CD8-positive, alpha-beta memory T cell (primary cell): ENCODE measurements at regions of chr12 and their contacts with region 1.

Region 1: DNA sequence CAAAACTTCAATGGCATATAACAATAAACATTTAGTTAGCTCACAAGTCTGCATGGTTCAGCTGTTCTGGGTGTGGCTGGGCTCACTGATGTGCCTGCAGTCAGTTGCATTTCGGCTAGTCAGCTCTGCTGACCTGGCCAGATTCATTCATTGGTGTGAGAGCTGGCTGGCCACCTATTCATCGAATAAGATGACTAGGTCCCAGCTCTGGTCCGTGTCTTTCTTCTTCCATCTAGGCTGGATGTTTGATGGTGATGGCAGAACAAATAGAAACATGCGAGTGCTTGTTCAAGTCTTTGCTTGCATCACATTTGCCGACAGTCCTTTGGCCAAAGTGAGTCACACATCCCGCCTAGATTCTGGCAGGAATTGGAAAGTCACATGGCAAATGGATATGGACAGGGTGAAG is 203.3 kb upstream of the CRY1 start:
- DNase-seq: no peak
- H3K4me3 ChIP-seq: no peak overlapping the region
- H3K4me3 Mint-ChIP-seq: no peak overlapping the region
- H3K27ac ChIP-seq: no peak overlapping the region
- H3K27ac Mint-ChIP-seq: no peak overlapping the region
- H3K4me1 ChIP-seq: peaks cover 5% of the 10 kb centered on the region
- H3K4me1 Mint-ChIP-seq: peaks cover 5 to 10% (median 10%) of the 10 kb centered on the region in 3 donors
- H3K27me3 ChIP-seq: no peaks in the 10 kb centered on the region
- H3K27me3 Mint-ChIP-seq: peaks cover 0 to 1% of the 10 kb centered on the region in 2 donors

Region 2: GRCh38 chr12:106855221-106855758 is 441.4 kb before region 1 on chr12:
- CTCF ChIA-PET with region 1: no interaction called
- POLR2A ChIA-PET with region 1: interaction called, 12 read pairs
- DNase-seq: no peak
- H3K4me3 ChIP-seq: no peak overlapping the region
- H3K4me3 Mint-ChIP-seq: no peak overlapping the region
- H3K27ac ChIP-seq: no peak overlapping the region
- H3K27ac Mint-ChIP-seq: no peak overlapping the region
- H3K4me1 ChIP-seq: peaks cover 8% of the 10 kb centered on the region
- H3K4me1 Mint-ChIP-seq: peaks cover 4 to 5% (median 4%) of the 10 kb centered on the region in 3 donors
- H3K27me3 ChIP-seq: no peaks in the 10 kb centered on the region
- H3K27me3 Mint-ChIP-seq: no peaks in the 10 kb centered on the region

Region 3: DNA sequence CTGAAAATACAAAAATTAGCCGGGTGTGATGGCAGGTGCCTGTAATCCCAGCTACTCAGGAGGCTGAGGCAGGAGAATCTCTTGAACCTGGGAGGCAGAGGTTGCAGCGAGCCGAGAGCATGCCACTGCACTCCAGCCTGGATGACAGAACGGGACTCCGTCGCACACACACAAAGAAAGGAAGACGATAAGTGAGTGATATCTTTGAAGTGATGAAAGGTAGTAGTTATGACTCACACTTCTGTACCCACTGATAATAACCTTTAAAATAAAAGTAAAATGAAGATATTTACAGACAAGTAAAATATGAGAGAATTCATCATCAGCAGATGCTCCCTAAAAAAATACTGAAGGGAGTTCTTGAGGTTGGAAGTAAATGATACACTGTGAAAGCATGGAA is 32.0 kb before region 1 on chr12:
- CTCF ChIA-PET with region 1: no interaction called
- POLR2A ChIA-PET with region 1: no interaction called
- DNase-seq: no peak
- H3K4me3 ChIP-seq: no peak overlapping the region
- H3K4me3 Mint-ChIP-seq: peak overlapping the region in 2 of 7 donors; percentile 20 to 48
- H3K27ac ChIP-seq: no peak overlapping the region
- H3K27ac Mint-ChIP-seq: peak overlapping the region in 1 of 8 donors; percentile 49
- H3K4me1 ChIP-seq: no peaks in the 10 kb centered on the region
- H3K4me1 Mint-ChIP-seq: no peaks in the 10 kb centered on the region
- H3K27me3 ChIP-seq: no peaks in the 10 kb centered on the region
- H3K27me3 Mint-ChIP-seq: peaks cover 6 to 13% of the 10 kb centered on the region in 2 donors

Region 4: GRCh38 chr12:107372229-107372658 is 75.6 kb after region 1 on chr12:
- CTCF ChIA-PET with region 1: no interaction called
- POLR2A ChIA-PET with region 1: no interaction called
- DNase-seq: peak in 4 of 5 donors; percentile 30 to 69 (median 57)
- H3K4me3 ChIP-seq: peak overlapping the region; percentile 28
- H3K4me3 Mint-ChIP-seq: peak overlapping the region; percentile 52 to 79 (median 70)
- H3K27ac ChIP-seq: peak overlapping the region; percentile 5
- H3K27ac Mint-ChIP-seq: peak overlapping the region; percentile 48 to 97 (median 94)
- H3K4me1 ChIP-seq: peaks cover 71% of the 10 kb centered on the region
- H3K4me1 Mint-ChIP-seq: peaks cover 72 to 80% (median 75%) of the 10 kb centered on the region in 3 donors
- H3K27me3 ChIP-seq: no peaks in the 10 kb centered on the region
- H3K27me3 Mint-ChIP-seq: peaks cover 0 to 1% of the 10 kb centered on the region in 2 donors

Region 5: GRCh38 chr12:107515446-107515958 is 218.8 kb after region 1 on chr12:
- CTCF ChIA-PET with region 1: no interaction called
- POLR2A ChIA-PET with region 1: no interaction called
- DNase-seq: no peak
- H3K4me3 ChIP-seq: no peak overlapping the region
- H3K4me3 Mint-ChIP-seq: peak overlapping the region in 1 of 7 donors; percentile 16
- H3K27ac ChIP-seq: no peak overlapping the region
- H3K27ac Mint-ChIP-seq: peak overlapping the region in 2 of 8 donors; percentile 13 to 34
- H3K4me1 ChIP-seq: no peaks in the 10 kb centered on the region
- H3K4me1 Mint-ChIP-seq: peaks cover 12 to 15% (median 12%) of the 10 kb centered on the region in 3 donors
- H3K27me3 ChIP-seq: no peaks in the 10 kb centered on the region
- H3K27me3 Mint-ChIP-seq: no peaks in the 10 kb centered on the region